ENCODE measurements at regions of chr17 and their contacts with region 1.

Region 1: GRCh38 chr17:39153599-39154051 is 2.2 kb upstream of the PLXDC1 start:
- DNase-seq: peak; percentile 92 to 95
- ATAC-seq: peak; percentile 72 to 95 (median 90)
- H3K4me3 ChIP-seq: peak overlapping the region; percentile 54 to 94 (median 81)
- H3K27ac ChIP-seq: peak overlapping the region; percentile 77 to 97 (median 91)
- H3K4me1 ChIP-seq: peaks cover 3 to 40% (median 17%) of the 10 kb centered on the region in 9 donors
- H3K27me3 ChIP-seq: peaks cover 0 to 37% (median 12%) of the 10 kb centered on the region in 7 donors
- CTCF ChIP-seq: peak in 7 of 9 donors; percentile 13 to 38 (median 24)

Region 2: GRCh38 chr17:38742411-38743308 is 411.0 kb before region 1 on chr17:
- intact Hi-C with region 1: no loop called
- DNase-seq: peak in 1 of 2 donors; percentile 89
- ATAC-seq: peak; percentile 36 to 75 (median 60)
- H3K4me3 ChIP-seq: peak overlapping the region in 4 of 10 donors; percentile 0 to 16 (median 6)
- H3K27ac ChIP-seq: peak overlapping the region; percentile 9 to 88 (median 78)
- H3K4me1 ChIP-seq: peaks cover 12 to 69% (median 53%) of the 10 kb centered on the region in 9 donors
- H3K27me3 ChIP-seq: peaks cover 0 to 19% (median 0%) of the 10 kb centered on the region in 7 donors
- CTCF ChIP-seq: no peak

Region 3: GRCh38 chr17:38868817-38869525 is 284.7 kb before region 1 on chr17:
- intact Hi-C with region 1: loop called in 4 of 10 experiments (anchors 2 to 10 kb)
- DNase-seq: peak; percentile 85 to 92
- ATAC-seq: peak; percentile 72 to 87 (median 80)
- H3K4me3 ChIP-seq: peak overlapping the region; percentile 75 to 99 (median 94)
- H3K27ac ChIP-seq: peak overlapping the region; percentile 85 to 99 (median 95)
- H3K4me1 ChIP-seq: peaks cover 14 to 50% (median 41%) of the 10 kb centered on the region in 9 donors
- H3K27me3 ChIP-seq: no peaks in the 10 kb centered on the region
- CTCF ChIP-seq: peak in 4 of 9 donors; percentile 7 to 53 (median 47)

Region 4: DNA sequence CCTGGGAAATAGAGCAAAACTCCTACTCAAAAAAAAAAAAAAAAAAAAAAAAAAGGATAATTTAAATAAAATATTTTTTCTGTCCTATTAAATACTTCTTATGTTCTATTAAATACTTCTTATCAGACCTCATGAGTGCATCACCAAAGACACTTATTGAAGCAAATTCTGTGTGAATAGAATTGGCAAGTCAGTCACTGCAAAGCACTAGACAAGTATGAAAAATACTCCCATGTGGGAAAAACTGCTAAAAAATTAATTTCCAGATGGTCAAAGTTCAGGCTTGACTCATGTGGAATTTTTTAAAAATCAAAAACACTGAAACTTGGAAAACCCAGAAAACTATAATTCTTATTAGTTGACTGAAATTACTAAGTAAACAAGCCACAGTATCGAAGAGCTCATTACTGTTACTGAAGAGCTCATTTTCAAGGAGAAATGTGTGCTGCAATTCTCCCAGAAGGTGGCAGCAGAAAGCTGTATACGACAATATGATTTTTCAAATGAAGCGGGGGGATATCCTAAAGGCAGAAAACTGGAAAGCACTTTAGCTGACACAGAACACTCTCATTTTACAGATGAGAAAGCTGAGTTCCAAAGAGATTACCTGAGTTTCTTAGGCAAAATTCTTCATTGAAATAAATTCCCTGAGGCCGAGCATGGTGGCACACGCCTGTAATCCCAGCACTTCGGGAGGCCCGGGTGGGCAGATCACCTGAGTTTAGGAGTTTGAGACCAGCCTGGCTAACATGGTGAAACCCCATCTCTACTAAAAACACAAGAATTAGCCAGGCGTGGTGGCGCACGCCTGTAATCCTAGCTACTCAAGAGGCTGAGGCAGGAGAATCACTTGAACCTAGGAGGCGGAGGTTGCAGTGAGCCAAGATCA is 170.5 kb before region 1 on chr17:
- intact Hi-C with region 1: loop called (anchors 1 to 5 kb)
- DNase-seq: peak in 1 of 2 donors; percentile 70
- ATAC-seq: peak in 7 of 8 donors; percentile 52 to 79 (median 74)
- H3K4me3 ChIP-seq: no peak overlapping the region
- H3K27ac ChIP-seq: peak overlapping the region in 5 of 10 donors; percentile 8 to 71 (median 55)
- H3K4me1 ChIP-seq: peaks cover 0 to 9% (median 3%) of the 10 kb centered on the region in 9 donors
- H3K27me3 ChIP-seq: no peaks in the 10 kb centered on the region
- CTCF ChIP-seq: peak; percentile 66 to 92 (median 84)

Region 5: DNA sequence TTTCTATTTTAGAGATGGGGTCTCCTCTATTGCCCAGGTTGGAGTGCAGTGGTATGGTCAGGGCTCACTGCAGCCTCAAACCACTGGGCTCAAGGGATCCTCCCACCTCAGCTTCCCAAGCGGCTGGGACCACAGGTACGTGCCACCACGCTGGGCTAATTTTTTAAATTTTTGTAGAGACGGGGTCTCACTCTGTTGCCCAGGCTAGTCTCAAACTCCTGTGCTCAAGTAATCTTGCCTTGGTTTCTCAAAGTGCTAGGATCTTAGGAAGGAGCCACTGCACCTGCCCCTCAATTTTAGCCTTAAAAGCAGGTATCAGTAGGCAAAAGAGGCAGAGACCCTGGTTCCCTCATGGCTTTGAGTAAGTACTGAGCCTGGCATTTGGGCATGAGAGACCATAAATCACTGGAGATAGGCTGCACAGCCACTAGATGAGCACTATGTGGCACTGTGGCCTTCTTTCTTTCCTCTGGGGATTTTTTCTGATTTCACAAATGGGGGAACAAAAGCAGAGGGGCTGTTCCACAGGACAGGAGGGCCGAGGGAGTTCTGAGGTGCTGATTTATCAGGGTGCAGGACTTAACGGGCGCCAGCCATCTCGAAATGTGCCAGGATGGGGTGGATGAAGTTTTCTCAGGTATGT is 84.4 kb before region 1 on chr17:
- intact Hi-C with region 1: loop called in 8 of 10 experiments (anchors 1 to 5 kb)
- DNase-seq: no peak
- ATAC-seq: peak in 7 of 8 donors; percentile 37 to 64 (median 44)
- H3K4me3 ChIP-seq: no peak overlapping the region
- H3K27ac ChIP-seq: no peak overlapping the region
- H3K4me1 ChIP-seq: peaks cover 0 to 8% (median 4%) of the 10 kb centered on the region in 9 donors
- H3K27me3 ChIP-seq: no peaks in the 10 kb centered on the region
- CTCF ChIP-seq: peak; percentile 36 to 72 (median 61)

Region 6: GRCh38 chr17:39099663-39100286 is 53.9 kb before region 1 on chr17:
- intact Hi-C with region 1: loop called in 2 of 10 experiments (anchors 5 to 10 kb)
- DNase-seq: peak; percentile 37 to 90
- ATAC-seq: peak; percentile 48 to 76 (median 64)
- H3K4me3 ChIP-seq: no peak overlapping the region
- H3K27ac ChIP-seq: peak overlapping the region in 9 of 10 donors; percentile 29 to 85 (median 69)
- H3K4me1 ChIP-seq: peaks cover 7 to 66% (median 53%) of the 10 kb centered on the region in 9 donors
- H3K27me3 ChIP-seq: no peaks in the 10 kb centered on the region
- CTCF ChIP-seq: no peak